Naive thymus-derived CD4-positive, alpha-beta T cell (primary cell): ENCODE measurements at regions of chr7 and their contacts with region 1.

Region 1: GRCh38 chr7:11911900-11912299 is 79.9 kb upstream of the THSD7A start:
- DNase-seq: no peak
- ATAC-seq: no peak
- H3K4me3 ChIP-seq: no peak overlapping the region
- H3K4me3 Mint-ChIP-seq: no peak overlapping the region
- H3K27ac ChIP-seq: no peak overlapping the region
- H3K27ac Mint-ChIP-seq: no peak overlapping the region
- H3K4me1 ChIP-seq: no peaks in the 10 kb centered on the region
- H3K4me1 Mint-ChIP-seq: no peaks in the 10 kb centered on the region
- H3K27me3 ChIP-seq: no peaks in the 10 kb centered on the region
- H3K27me3 Mint-ChIP-seq: peaks cover 0 to 6% (median 0%) of the 10 kb centered on the region in 5 donors

Region 2: DNA sequence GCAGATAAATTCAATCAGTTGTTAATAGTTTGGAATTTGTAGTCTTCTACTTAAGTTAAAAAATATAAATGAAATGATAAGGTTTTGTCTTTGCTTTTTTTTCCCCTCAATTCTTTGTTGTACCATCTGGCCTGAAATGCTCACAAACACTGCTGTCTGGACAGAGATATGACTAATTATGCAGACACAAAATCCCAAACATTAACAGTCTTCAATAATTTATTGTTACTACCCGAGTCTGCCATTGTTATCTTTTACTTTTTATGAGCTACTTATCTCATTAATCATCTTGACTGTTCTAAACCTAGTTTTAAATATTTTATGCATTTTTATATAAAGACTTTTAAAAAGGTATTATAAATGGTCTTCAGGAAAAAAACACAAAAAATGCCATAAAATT is 15.2 kb before region 1 on chr7:
- CTCF ChIA-PET with region 1: no interaction called
- POLR2A ChIA-PET with region 1: no interaction called
- intact Hi-C with region 1: loop called in 1 of 2 experiments (anchors 1 kb)
- DNase-seq: no peak
- ATAC-seq: no peak
- H3K4me3 ChIP-seq: no peak overlapping the region
- H3K4me3 Mint-ChIP-seq: no peak overlapping the region
- H3K27ac ChIP-seq: no peak overlapping the region
- H3K27ac Mint-ChIP-seq: no peak overlapping the region
- H3K4me1 ChIP-seq: no peaks in the 10 kb centered on the region
- H3K4me1 Mint-ChIP-seq: no peaks in the 10 kb centered on the region
- H3K27me3 ChIP-seq: no peaks in the 10 kb centered on the region
- H3K27me3 Mint-ChIP-seq: no peaks in the 10 kb centered on the region

Region 3: GRCh38 chr7:11956991-11957390 is 45.1 kb after region 1 on chr7:
- CTCF ChIA-PET with region 1: no interaction called
- POLR2A ChIA-PET with region 1: no interaction called
- intact Hi-C with region 1: no loop called
- DNase-seq: no peak
- ATAC-seq: no peak
- H3K4me3 ChIP-seq: no peak overlapping the region
- H3K4me3 Mint-ChIP-seq: no peak overlapping the region
- H3K27ac ChIP-seq: no peak overlapping the region
- H3K27ac Mint-ChIP-seq: no peak overlapping the region
- H3K4me1 ChIP-seq: no peaks in the 10 kb centered on the region
- H3K4me1 Mint-ChIP-seq: no peaks in the 10 kb centered on the region
- H3K27me3 ChIP-seq: no peaks in the 10 kb centered on the region
- H3K27me3 Mint-ChIP-seq: peaks cover 0 to 4% (median 0%) of the 10 kb centered on the region in 5 donors

Region 4: GRCh38 chr7:12199363-12199762 is 287.5 kb after region 1 on chr7:
- CTCF ChIA-PET with region 1: no interaction called
- POLR2A ChIA-PET with region 1: no interaction called
- intact Hi-C with region 1: no loop called
- DNase-seq: no peak
- ATAC-seq: no peak
- H3K4me3 ChIP-seq: no peak overlapping the region
- H3K4me3 Mint-ChIP-seq: no peak overlapping the region
- H3K27ac ChIP-seq: no peak overlapping the region
- H3K27ac Mint-ChIP-seq: no peak overlapping the region
- H3K4me1 ChIP-seq: no peaks in the 10 kb centered on the region
- H3K4me1 Mint-ChIP-seq: no peaks in the 10 kb centered on the region
- H3K27me3 ChIP-seq: no peaks in the 10 kb centered on the region
- H3K27me3 Mint-ChIP-seq: peaks cover 0 to 29% (median 0%) of the 10 kb centered on the region in 5 donors